A673 (cell line): ENCODE measurements at regions of chr7 and their contacts with region 1.

Region 1: DNA sequence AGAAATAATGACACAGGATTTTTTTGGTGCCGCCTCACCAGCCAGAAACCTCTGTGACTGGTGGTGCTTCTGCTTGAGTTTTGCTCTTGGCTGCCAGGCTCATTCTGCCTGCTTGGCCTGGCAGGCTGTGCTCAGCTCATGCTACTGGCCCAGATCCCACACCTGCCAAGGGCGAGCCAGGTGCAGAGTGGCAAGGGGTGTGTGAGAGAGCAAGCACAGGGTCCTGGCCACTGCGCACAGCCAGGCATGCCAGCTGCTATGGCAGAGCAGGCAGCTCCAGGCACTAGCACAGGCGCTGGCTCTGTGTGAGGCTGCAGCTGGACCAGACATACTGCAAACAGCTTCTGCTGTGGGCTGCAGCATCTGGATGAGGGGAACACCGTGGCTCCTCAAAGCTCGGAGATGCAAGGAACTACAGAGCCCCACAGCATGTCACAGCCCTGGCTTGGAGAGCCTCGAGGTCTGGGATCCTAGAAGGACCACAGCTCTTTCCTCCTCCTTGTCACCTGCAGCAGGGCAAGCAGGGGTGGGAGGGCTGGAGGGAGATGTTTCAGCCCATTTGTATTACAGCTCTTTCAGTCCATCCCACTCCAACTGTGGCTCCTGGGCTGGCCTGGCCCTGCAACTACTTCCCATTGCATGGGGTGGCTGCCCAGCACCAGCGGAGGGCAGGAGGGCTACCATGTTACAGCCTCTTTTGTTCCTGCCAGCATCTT is 313.4 kb upstream of the SEMA3C start:
- DNase-seq: no peak
- H3K4me3 ChIP-seq: no peak overlapping the region
- H3K27ac ChIP-seq: no peak overlapping the region
- H3K4me1 ChIP-seq: peaks cover 51% of the 10 kb centered on the region
- H3K27me3 ChIP-seq: no peaks in the 10 kb centered on the region
- CTCF ChIP-seq: no peak

Region 2: GRCh38 chr7:80807166-80807885 is 424.9 kb before region 1 on chr7:
- CTCF ChIA-PET with region 1: no interaction called
- POLR2A ChIA-PET with region 1: no interaction called
- intact Hi-C with region 1: loop called (anchors 10 kb)
- DNase-seq: peak; percentile 66
- H3K4me3 ChIP-seq: peak overlapping the region; percentile 10
- H3K27ac ChIP-seq: peak overlapping the region; percentile 53
- H3K4me1 ChIP-seq: peaks cover 38% of the 10 kb centered on the region
- H3K27me3 ChIP-seq: no peaks in the 10 kb centered on the region
- CTCF ChIP-seq: no peak

Region 3: GRCh38 chr7:80907141-80907601 is 325.1 kb before region 1 on chr7:
- CTCF ChIA-PET with region 1: no interaction called
- POLR2A ChIA-PET with region 1: no interaction called
- intact Hi-C with region 1: loop called (anchors 5 kb)
- DNase-seq: peak; percentile 95
- H3K4me3 ChIP-seq: no peak overlapping the region
- H3K27ac ChIP-seq: no peak overlapping the region
- H3K4me1 ChIP-seq: peaks cover 41% of the 10 kb centered on the region
- H3K27me3 ChIP-seq: peaks cover 6% of the 10 kb centered on the region
- CTCF ChIP-seq: no peak